CD8-positive, alpha-beta memory T cell (primary cell): ENCODE measurements at regions of chr4 and their contacts with region 1.

Region 1: DNA sequence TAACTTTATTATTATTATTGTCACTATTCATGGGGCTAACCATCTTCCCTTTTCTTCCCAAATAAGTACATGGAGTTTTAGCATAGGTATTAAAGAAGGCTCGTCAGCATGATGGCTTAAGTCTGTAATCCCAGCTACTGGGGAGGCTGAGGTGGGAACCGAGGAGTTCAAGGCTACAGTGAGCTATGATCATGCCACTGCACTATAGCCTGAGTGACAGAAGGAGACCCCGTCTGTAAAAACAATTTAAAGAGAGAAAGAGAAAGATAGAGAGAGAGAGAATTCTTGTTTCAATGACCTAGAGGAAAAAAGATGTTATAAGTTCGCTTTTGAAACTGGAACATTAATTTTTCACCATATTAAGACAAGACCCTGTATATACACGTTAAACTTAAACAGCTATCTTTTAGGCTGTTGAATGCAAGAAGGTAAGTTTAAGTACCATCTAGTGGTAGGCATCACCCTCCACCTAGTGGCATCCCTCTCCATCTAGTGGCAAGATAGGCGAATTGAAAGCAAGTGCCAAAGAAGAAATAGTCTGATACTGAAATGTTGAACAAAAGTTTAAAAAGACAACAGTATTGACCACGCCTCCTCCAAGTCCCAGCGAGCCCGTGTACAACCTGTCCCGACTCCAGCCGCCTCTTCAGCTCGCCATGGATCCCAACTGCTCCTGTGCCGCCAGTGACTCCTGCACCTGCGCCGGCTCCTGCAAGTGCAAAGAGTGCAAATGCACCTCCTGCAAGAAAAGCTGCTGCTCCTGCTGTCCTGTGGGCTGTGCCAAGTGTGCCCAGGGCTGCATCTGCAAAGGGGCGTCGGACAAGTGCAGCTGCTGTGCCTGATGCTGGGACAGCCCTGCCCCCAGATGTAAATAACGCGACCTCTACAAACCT is 26.0 kb upstream of the YTHDC1 start:
- DNase-seq: peak; percentile 7 to 65 (median 58)
- H3K4me3 ChIP-seq: peak overlapping the region; percentile 46
- H3K4me3 Mint-ChIP-seq: peak overlapping the region; percentile 21 to 89 (median 80)
- H3K27ac ChIP-seq: no peak overlapping the region
- H3K27ac Mint-ChIP-seq: peak overlapping the region in 2 of 8 donors; percentile 42 to 66
- H3K4me1 ChIP-seq: peaks cover 4% of the 10 kb centered on the region
- H3K4me1 Mint-ChIP-seq: peaks cover 11 to 17% (median 14%) of the 10 kb centered on the region in 3 donors
- H3K27me3 ChIP-seq: no peaks in the 10 kb centered on the region
- H3K27me3 Mint-ChIP-seq: peaks cover 7% of the 10 kb centered on the region in 2 donors

Region 2: GRCh38 chr4:67934628-67935027 is 441.3 kb before region 1 on chr4:
- CTCF ChIA-PET with region 1: no interaction called
- POLR2A ChIA-PET with region 1: no interaction called
- DNase-seq: no peak
- H3K4me3 ChIP-seq: no peak overlapping the region
- H3K4me3 Mint-ChIP-seq: no peak overlapping the region
- H3K27ac ChIP-seq: no peak overlapping the region
- H3K27ac Mint-ChIP-seq: no peak overlapping the region
- H3K4me1 ChIP-seq: no peaks in the 10 kb centered on the region
- H3K4me1 Mint-ChIP-seq: no peaks in the 10 kb centered on the region
- H3K27me3 ChIP-seq: no peaks in the 10 kb centered on the region
- H3K27me3 Mint-ChIP-seq: peaks cover 2 to 8% of the 10 kb centered on the region in 2 donors

Region 3: DNA sequence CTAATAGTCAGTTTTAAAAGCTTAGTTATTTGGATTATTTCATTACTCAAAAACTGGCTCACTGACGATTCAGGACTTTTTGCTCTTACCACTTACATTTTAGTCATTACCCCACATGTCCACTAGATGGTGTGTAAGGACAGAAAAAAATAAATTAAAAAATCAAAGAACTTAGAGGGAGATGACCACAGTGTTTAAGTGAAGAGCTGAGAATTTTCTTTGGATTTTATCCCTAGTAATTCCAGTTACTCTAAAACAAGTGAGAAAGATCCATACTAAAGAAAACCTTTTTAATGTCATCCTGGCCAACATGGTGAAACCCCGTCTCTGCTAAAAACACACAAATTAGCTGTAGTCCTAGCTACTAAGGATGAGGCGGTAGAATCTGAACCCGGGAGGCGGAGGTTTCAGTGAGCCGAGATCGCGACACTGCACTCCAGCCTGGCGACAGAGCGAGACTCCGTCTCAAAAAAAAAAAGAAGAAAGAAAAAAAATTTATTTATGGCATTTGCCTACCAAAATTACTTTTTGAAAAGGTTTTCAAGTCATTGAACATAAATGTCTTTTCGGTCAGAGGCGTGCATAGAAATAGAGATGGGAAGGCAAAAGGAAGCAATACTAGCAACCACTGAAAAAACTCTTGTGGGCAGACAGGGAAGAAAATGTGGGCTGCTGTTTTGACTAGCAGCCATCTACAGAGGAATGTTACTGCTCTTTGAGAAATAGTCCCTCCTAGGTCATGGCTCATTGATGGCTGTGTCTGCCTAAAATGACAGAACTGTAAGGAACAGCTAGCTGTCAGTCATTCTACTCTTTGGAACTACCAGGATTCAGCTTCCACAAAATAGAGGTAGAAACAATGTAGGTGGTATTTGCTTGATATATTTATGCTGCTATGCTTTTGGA is 103.8 kb before region 1 on chr4:
- CTCF ChIA-PET with region 1: interaction called, 21 read pairs
- POLR2A ChIA-PET with region 1: no interaction called
- DNase-seq: peak in 2 of 5 donors; percentile 30 to 37
- H3K4me3 ChIP-seq: no peak overlapping the region
- H3K4me3 Mint-ChIP-seq: peak overlapping the region in 2 of 7 donors; percentile 35 to 47
- H3K27ac ChIP-seq: no peak overlapping the region
- H3K27ac Mint-ChIP-seq: no peak overlapping the region
- H3K4me1 ChIP-seq: no peaks in the 10 kb centered on the region
- H3K4me1 Mint-ChIP-seq: peaks cover 0 to 4% (median 0%) of the 10 kb centered on the region in 3 donors
- H3K27me3 ChIP-seq: no peaks in the 10 kb centered on the region
- H3K27me3 Mint-ChIP-seq: peaks cover 7 to 16% of the 10 kb centered on the region in 2 donors

Region 4: GRCh38 chr4:68693325-68694075 is 317.6 kb after region 1 on chr4:
- CTCF ChIA-PET with region 1: no interaction called
- POLR2A ChIA-PET with region 1: no interaction called
- DNase-seq: no peak
- H3K4me3 ChIP-seq: no peak overlapping the region
- H3K4me3 Mint-ChIP-seq: no peak overlapping the region
- H3K27ac ChIP-seq: no peak overlapping the region
- H3K27ac Mint-ChIP-seq: no peak overlapping the region
- H3K4me1 ChIP-seq: no peaks in the 10 kb centered on the region
- H3K4me1 Mint-ChIP-seq: no peaks in the 10 kb centered on the region
- H3K27me3 ChIP-seq: no peaks in the 10 kb centered on the region
- H3K27me3 Mint-ChIP-seq: no peaks in the 10 kb centered on the region